Keratinocyte (primary cell): ENCODE measurements at regions of chr11 and their contacts with region 1.

Region 1: DNA sequence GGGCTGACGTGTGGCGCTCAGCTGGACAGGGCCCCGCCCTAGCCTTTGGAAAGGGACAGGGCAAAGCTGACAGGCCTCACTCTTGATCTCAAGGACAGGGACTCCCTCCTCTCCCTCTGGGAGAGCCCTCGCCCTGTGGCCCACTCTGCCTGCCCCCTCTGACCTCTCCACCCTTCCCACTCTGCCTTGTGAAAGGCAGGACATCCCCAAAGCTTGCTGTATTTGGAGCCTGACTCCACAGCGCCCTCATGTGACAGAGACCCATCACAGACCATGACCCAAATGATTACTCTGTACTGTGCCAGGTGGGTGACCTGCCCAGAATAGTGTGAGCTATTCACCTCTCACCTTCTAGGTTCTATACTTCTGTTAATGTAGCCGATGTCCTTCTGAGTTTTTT is 18.8 kb downstream of the P2RY2 start:
- DNase-seq: no peak
- H3K4me3 ChIP-seq: no peak overlapping the region
- H3K27ac ChIP-seq: no peak overlapping the region
- H3K4me1 ChIP-seq: peaks cover 17% of the 10 kb centered on the region
- H3K27me3 ChIP-seq: no peaks in the 10 kb centered on the region
- CTCF ChIP-seq: peak; percentile 86 to 96 (median 90)

Region 2: DNA sequence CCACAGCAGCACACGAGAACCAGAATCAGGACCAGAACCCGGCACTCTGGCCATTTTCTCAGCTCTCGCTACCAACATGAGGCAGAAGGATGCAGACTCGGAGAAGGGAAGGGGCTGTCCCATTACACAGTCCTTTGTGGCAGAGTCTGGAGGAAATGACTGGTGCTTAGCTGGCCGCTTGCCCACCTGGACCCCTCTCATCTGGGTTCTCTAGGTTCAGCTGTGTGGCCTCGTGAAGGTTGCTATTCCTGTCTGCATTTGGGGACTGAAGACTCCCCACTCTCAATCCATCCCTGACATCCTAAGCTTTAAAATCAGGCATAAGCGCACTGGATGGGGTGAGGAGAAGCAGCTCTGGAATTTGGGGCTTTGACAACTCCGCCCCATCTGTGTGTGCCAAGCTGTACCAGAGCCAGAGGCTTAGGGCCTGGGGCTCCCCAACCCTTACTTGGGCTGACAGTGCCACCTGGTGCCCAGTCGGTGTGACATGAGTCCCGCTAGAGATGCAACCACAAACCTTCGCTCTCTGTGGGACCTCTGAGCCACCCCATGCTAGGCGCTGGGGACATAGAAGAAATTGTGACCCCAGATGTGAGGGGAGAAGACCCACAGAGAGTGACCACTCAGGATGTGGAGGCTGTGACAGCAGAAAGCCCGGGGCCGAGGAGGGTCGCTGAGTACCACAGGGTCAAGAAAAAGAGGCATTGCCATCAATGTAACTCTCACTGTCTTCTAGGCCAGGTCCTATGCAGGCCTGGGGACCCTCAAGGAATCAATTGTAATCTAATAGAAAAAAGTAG is 58.9 kb before region 1 on chr11:
- dilution Hi-C with region 1: loop called (anchors 5 kb)
- DNase-seq: no peak
- H3K4me3 ChIP-seq: no peak overlapping the region
- H3K27ac ChIP-seq: peak overlapping the region; percentile 31
- H3K4me1 ChIP-seq: peaks cover 20% of the 10 kb centered on the region
- H3K27me3 ChIP-seq: no peaks in the 10 kb centered on the region
- CTCF ChIP-seq: peak; percentile 80 to 97 (median 83)